Naive thymus-derived CD4-positive, alpha-beta T cell (primary cell): ENCODE measurements at regions of chr15 and their contacts with region 1.

Region 1: DNA sequence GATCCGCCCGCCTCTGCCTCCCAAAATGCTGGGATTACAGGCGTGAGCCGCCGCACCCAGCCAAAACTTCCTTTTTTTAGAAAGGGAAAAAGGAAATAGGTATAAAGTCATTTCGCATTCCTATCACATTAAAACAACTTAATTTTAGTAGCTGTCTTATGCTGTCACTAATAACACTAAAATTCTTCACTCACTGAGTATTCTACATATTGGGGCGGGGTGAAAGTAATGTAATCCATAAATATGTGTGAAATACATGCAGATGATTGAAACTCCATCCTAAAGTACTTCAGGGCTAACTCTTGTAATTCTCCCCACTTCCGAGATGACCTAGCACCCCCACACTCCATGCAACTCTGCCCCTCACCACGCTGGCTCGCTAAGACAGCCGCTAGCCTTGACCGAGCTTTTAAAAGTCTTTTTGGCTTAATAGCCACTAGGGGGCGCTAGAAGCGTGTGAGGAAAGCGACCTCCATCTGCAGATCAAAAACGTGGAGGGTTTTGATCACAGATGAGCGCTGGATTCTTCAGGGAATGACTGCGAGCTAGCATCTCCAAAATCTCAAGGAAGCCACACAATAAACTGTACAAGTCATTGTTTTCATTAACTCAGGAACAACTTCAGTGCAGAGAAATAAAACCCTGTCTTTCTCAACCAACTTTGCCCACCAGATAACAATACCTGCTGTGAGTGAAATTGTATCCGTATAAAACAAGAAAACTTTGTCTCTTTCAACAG is 129.3 kb upstream of the IGF1R start:
- DNase-seq: peak; percentile 16 to 70 (median 52)
- ATAC-seq: peak; percentile 85
- H3K4me3 ChIP-seq: no peak overlapping the region
- H3K4me3 Mint-ChIP-seq: no peak overlapping the region
- H3K27ac ChIP-seq: no peak overlapping the region
- H3K27ac Mint-ChIP-seq: peak overlapping the region in 1 of 9 donors; percentile 13
- H3K4me1 ChIP-seq: no peaks in the 10 kb centered on the region
- H3K4me1 Mint-ChIP-seq: peaks cover 0 to 8% (median 6%) of the 10 kb centered on the region in 7 donors
- H3K27me3 ChIP-seq: no peaks in the 10 kb centered on the region
- H3K27me3 Mint-ChIP-seq: peaks cover 0 to 7% (median 5%) of the 10 kb centered on the region in 5 donors

Region 2: GRCh38 chr15:98503970-98504369 is 15.0 kb before region 1 on chr15:
- CTCF ChIA-PET with region 1: no interaction called
- POLR2A ChIA-PET with region 1: no interaction called
- intact Hi-C with region 1: no loop called
- DNase-seq: no peak
- ATAC-seq: no peak
- H3K4me3 ChIP-seq: no peak overlapping the region
- H3K4me3 Mint-ChIP-seq: no peak overlapping the region
- H3K27ac ChIP-seq: no peak overlapping the region
- H3K27ac Mint-ChIP-seq: no peak overlapping the region
- H3K4me1 ChIP-seq: no peaks in the 10 kb centered on the region
- H3K4me1 Mint-ChIP-seq: peaks cover 0 to 3% (median 0%) of the 10 kb centered on the region in 7 donors
- H3K27me3 ChIP-seq: no peaks in the 10 kb centered on the region
- H3K27me3 Mint-ChIP-seq: peaks cover 44 to 60% (median 55%) of the 10 kb centered on the region in 5 donors

Region 3: DNA sequence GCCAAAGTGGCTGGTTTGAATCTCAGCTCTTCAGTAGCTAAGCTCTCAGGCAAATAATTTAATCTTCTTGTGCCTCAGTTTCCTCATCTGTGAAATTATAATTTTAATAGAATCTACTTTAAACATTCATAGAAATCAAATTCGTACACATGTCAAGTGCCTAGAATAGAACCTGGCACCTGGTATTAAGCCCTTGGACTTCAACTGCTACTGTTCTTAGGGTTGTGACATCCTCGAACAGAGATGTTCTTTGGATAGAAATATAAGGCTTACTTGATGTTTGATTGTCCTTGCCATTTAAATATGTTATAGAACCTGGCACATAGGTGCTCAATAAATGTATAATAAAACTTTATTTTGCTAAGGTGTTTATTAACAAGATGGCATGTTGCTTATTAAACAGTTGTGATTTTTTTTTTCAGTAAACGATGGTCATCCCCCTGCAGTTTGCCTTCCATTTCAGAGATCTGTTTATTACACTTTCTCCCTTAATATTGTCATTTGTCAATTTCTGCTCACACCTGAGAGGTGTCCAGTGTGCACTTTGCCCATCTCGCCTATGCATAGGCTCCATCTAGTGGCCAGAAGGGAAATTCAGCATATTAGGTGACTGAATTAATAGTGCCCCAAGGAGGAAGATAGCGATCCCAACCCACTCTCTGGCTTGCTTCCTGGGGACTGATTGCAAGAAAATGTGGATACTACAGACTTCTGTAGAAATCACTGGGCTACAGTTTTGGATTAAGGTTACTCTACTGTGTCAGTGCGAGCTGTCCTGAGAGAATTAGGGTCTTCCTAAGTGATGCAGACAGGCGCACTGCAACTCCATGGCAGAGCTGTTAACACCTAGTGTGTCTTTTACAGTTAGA is 140.1 kb after region 1 on chr15:
- CTCF ChIA-PET with region 1: interaction called, 95 read pairs
- POLR2A ChIA-PET with region 1: no interaction called
- intact Hi-C with region 1: loop called (anchors 1 kb)
- DNase-seq: peak in 7 of 9 donors; percentile 24 to 56 (median 49)
- ATAC-seq: peak; percentile 85
- H3K4me3 ChIP-seq: no peak overlapping the region
- H3K4me3 Mint-ChIP-seq: no peak overlapping the region
- H3K27ac ChIP-seq: no peak overlapping the region
- H3K27ac Mint-ChIP-seq: peak overlapping the region in 2 of 9 donors; percentile 43 to 73
- H3K4me1 ChIP-seq: peaks cover 0 to 23% of the 10 kb centered on the region in 2 donors
- H3K4me1 Mint-ChIP-seq: peaks cover 15 to 79% (median 71%) of the 10 kb centered on the region in 7 donors
- H3K27me3 ChIP-seq: no peaks in the 10 kb centered on the region
- H3K27me3 Mint-ChIP-seq: peaks cover 0 to 6% (median 0%) of the 10 kb centered on the region in 5 donors

Region 4: DNA sequence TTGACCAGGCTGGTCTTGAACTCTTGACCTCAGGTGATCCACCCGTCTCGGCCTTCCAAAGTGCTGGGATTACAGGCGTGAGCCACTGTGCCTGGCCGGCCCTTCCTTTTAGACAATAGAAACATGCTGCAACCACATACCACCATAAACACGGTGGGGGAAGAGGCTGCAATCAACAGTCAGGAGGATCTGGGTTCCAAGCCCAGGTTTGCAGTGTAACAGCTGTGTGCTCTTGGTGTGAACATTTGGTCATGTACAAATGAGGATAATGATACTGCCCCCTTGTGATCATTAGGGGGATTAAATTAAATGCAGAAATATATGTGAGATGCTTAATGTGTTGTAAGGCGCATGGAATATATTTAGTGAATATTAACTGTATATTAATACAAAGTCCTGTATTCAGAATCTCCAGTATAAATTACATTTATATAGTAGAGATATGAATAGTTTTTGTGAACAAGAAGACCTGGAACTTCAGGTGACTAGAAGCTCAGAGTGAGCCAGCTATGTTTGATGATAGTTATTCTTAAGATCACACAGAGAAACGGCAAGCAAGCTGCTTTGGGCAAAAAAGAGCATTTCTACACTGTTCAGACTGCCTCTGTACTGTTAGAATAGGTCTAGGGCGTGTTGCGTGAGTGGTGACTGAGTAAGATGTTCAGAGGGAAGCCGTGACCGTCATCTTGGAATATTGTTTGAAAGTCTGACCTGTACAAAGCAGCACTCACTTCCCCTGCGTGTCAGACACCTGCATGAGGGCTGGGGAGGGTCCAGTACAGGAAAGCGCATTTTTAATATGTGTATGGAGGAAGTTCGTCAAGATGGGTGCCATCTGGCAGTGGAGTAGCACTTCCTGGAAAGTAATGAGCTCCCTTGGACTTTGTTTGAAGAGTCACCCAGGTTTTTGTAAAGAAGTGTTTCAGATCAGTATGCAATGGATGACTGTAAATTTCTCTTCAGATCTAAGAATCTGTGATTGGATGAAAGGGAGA is 362.8 kb after region 1 on chr15:
- CTCF ChIA-PET with region 1: interaction called, 10 read pairs
- POLR2A ChIA-PET with region 1: no interaction called
- intact Hi-C with region 1: loop called (anchors 1 kb)
- DNase-seq: peak in 6 of 9 donors; percentile 19 to 52 (median 38)
- ATAC-seq: peak; percentile 72
- H3K4me3 ChIP-seq: no peak overlapping the region
- H3K4me3 Mint-ChIP-seq: peak overlapping the region in 1 of 10 donors; percentile 39
- H3K27ac ChIP-seq: no peak overlapping the region
- H3K27ac Mint-ChIP-seq: peak overlapping the region in 3 of 9 donors; percentile 19 to 74 (median 65)
- H3K4me1 ChIP-seq: peaks cover 0 to 8% of the 10 kb centered on the region in 2 donors
- H3K4me1 Mint-ChIP-seq: peaks cover 6 to 73% (median 54%) of the 10 kb centered on the region in 7 donors
- H3K27me3 ChIP-seq: no peaks in the 10 kb centered on the region
- H3K27me3 Mint-ChIP-seq: no peaks in the 10 kb centered on the region

Region 5: GRCh38 chr15:99059010-99059981 is 540.3 kb after region 1 on chr15:
- CTCF ChIA-PET with region 1: interaction called, 5 read pairs
- POLR2A ChIA-PET with region 1: no interaction called
- intact Hi-C with region 1: loop called (anchors 1 to 5 kb)
- DNase-seq: peak in 8 of 9 donors; percentile 14 to 75 (median 50)
- ATAC-seq: peak; percentile 85
- H3K4me3 ChIP-seq: peak overlapping the region; percentile 50
- H3K4me3 Mint-ChIP-seq: peak overlapping the region; percentile 66 to 83 (median 70)
- H3K27ac ChIP-seq: no peak overlapping the region
- H3K27ac Mint-ChIP-seq: no peak overlapping the region
- H3K4me1 ChIP-seq: peaks cover 0 to 3% of the 10 kb centered on the region in 2 donors
- H3K4me1 Mint-ChIP-seq: peaks cover 0 to 14% (median 8%) of the 10 kb centered on the region in 7 donors
- H3K27me3 ChIP-seq: peaks cover 0 to 18% of the 10 kb centered on the region in 2 donors
- H3K27me3 Mint-ChIP-seq: peaks cover 29 to 59% (median 37%) of the 10 kb centered on the region in 5 donors